CD8-positive, alpha-beta T cell (primary cell): ENCODE measurements at regions of chr16 and their contacts with region 1.

Region 1: GRCh38 chr16:66588981-66589713 is 9.9 kb downstream of the CMTM2 start:
- DNase-seq: peak; percentile 45 to 85 (median 70)
- ATAC-seq: peak; percentile 94
- H3K4me3 ChIP-seq: no peak overlapping the region
- H3K4me3 Mint-ChIP-seq: peak overlapping the region; percentile 83
- H3K27ac ChIP-seq: no peak overlapping the region
- H3K27ac Mint-ChIP-seq: peak overlapping the region; percentile 49
- H3K4me1 ChIP-seq: peaks cover 25% of the 10 kb centered on the region
- H3K4me1 Mint-ChIP-seq: peaks cover 24% of the 10 kb centered on the region
- H3K27me3 ChIP-seq: no peaks in the 10 kb centered on the region
- H3K27me3 Mint-ChIP-seq: no peaks in the 10 kb centered on the region
- CTCF ChIP-seq: peak; percentile 71

Region 2: DNA sequence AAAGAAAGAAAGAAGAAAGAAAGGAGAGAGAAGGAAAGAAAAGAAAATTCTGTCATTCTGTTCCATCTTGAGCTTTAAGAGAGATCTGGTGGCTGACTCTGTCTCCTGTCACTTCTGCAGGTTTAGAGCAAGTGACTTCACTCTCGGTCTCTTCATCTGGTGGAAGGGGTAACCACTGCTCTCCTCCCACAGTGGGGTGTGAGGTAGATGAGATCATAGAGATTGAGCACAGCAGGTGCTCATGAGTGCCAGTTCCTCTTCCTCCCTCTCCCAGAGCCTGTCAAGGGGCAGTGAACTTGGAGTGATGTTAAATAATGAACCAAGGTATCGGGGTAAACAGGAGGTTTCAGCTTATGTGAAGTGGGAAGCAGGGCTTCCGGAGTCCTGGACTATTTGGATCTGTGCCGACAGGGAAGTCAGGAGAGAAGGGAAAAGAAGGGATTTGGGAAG is 114.4 kb before region 1 on chr16:
- CTCF ChIA-PET with region 1: interaction called, 17 read pairs
- POLR2A ChIA-PET with region 1: no interaction called
- intact Hi-C with region 1: loop called (anchors 1 kb)
- DNase-seq: peak in 8 of 9 experiments; percentile 28 to 85 (median 62)
- ATAC-seq: peak; percentile 90
- H3K4me3 ChIP-seq: no peak overlapping the region
- H3K4me3 Mint-ChIP-seq: no peak overlapping the region
- H3K27ac ChIP-seq: peak overlapping the region in 1 of 2 experiments; percentile 6
- H3K27ac Mint-ChIP-seq: peak overlapping the region; percentile 81
- H3K4me1 ChIP-seq: peaks cover 24% of the 10 kb centered on the region
- H3K4me1 Mint-ChIP-seq: peaks cover 26% of the 10 kb centered on the region
- H3K27me3 ChIP-seq: no peaks in the 10 kb centered on the region
- H3K27me3 Mint-ChIP-seq: no peaks in the 10 kb centered on the region
- CTCF ChIP-seq: no peak

Region 3: GRCh38 chr16:66511615-66512500 is 77.3 kb before region 1 on chr16:
- CTCF ChIA-PET with region 1: interaction called, 23 read pairs
- POLR2A ChIA-PET with region 1: interaction called, 4 read pairs
- intact Hi-C with region 1: loop called in 1 of 2 experiments (anchors 1 kb)
- DNase-seq: peak in 2 of 9 experiments; percentile 27 to 33
- ATAC-seq: no peak
- H3K4me3 ChIP-seq: no peak overlapping the region
- H3K4me3 Mint-ChIP-seq: no peak overlapping the region
- H3K27ac ChIP-seq: no peak overlapping the region
- H3K27ac Mint-ChIP-seq: no peak overlapping the region
- H3K4me1 ChIP-seq: peaks cover 19% of the 10 kb centered on the region
- H3K4me1 Mint-ChIP-seq: peaks cover 27% of the 10 kb centered on the region
- H3K27me3 ChIP-seq: no peaks in the 10 kb centered on the region
- H3K27me3 Mint-ChIP-seq: no peaks in the 10 kb centered on the region
- CTCF ChIP-seq: no peak